PC-3 (cell line): ENCODE measurements at regions of chr7 and their contacts with region 1.

Region 1: GRCh38 chr7:149497456-149498261 is at the start of gene ZNF746:
- DNase-seq: peak; percentile 79
- ATAC-seq: peak; percentile 90
- H3K4me3 ChIP-seq: peak within 1 kb of the TSS; percentile 82
- H3K27ac ChIP-seq: no peak within 1 kb of the TSS
- H3K4me1 ChIP-seq: peaks cover 16% of the 10 kb centered on the region
- H3K27me3 ChIP-seq: no peaks in the 10 kb centered on the region
- CTCF ChIP-seq: peak; percentile 21; the same call in 1 of the 2 replicates
- total RNA-seq, gene ZNF746: 19.6 and 27.4 TPM in 2 replicates

Region 2: DNA sequence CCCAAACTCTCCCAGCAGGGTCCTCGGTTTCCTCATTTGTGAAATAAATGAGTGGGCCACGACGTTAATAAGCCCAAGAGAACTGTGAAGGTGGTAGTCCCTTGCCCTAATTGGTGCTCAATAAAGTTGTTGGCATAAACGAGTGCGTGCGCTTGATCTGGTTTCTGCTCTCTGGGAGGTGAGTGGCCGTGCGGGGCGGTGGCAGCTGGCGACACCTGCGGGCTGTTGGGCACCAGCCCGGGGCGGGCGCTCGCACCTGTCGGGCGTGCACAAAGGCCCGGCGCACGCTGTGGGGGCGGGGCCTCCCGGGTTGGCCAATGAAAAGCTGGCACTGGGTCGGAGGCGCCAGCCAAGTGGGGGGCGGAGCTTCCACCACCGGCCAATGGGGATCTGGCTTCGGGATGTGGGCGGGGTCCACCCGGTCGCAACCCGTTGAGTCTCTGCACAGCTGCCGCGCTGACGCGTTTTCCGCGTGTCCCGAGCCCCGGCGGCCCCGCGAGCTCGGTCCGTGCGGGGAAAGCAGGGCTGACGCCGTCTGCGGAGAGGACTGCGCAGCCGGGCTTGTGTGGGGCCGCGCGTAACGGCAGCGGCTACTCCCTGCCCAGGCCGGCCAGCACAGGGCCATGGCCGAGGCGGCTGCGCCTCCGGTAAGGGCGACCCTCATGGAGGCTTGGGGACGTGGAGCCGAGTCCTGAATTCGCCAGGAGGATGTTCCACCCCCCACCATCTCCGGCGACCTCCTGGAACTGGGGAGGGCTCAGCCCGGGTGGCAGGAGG is 212.6 kb before region 1 on chr7:
- CTCF ChIA-PET with region 1: no interaction called
- POLR2A ChIA-PET with region 1: no interaction called
- intact Hi-C with region 1: loop called (anchors 10 kb)
- DNase-seq: peak; percentile 92
- ATAC-seq: peak; percentile 85
- H3K4me3 ChIP-seq: peak overlapping the region; percentile 67
- H3K27ac ChIP-seq: no peak overlapping the region
- H3K4me1 ChIP-seq: peaks cover 34% of the 10 kb centered on the region
- H3K27me3 ChIP-seq: no peaks in the 10 kb centered on the region
- CTCF ChIP-seq: no peak; the same call in 1 of the 2 replicates

Region 3: DNA sequence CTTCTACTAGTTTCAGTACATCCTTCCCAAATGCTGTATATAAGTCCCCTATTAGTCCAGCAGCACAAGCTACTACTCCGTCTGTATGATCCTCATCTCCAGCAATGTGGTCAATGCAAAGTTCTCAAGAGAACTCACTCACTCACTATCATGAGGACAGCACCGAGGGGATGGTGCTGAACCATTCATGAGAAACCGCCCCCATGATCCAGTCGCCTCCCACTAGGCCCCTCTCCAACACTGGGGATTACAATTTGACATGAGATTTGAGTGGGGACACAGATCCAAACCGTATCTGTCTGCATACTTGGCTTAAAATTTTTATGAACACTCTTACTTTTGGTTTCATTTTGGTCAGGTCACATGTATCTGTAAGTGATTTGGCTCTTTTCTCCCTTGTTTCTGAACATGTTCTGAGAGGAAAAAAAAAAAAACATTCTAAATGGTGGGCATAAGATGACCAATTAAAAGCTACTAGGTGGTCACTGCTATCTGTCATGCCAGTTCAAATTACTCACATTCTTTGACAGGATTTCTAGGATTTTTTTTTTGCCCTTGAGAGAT is 175.6 kb before region 1 on chr7:
- CTCF ChIA-PET with region 1: no interaction called
- POLR2A ChIA-PET with region 1: no interaction called
- intact Hi-C with region 1: no loop called
- DNase-seq: no peak
- ATAC-seq: no peak
- H3K4me3 ChIP-seq: no peak overlapping the region
- H3K27ac ChIP-seq: no peak overlapping the region
- H3K4me1 ChIP-seq: no peaks in the 10 kb centered on the region
- H3K27me3 ChIP-seq: no peaks in the 10 kb centered on the region
- CTCF ChIP-seq: no peak